ENCODE measurements at regions of chr13 and their contacts with region 1.

Region 1: DNA sequence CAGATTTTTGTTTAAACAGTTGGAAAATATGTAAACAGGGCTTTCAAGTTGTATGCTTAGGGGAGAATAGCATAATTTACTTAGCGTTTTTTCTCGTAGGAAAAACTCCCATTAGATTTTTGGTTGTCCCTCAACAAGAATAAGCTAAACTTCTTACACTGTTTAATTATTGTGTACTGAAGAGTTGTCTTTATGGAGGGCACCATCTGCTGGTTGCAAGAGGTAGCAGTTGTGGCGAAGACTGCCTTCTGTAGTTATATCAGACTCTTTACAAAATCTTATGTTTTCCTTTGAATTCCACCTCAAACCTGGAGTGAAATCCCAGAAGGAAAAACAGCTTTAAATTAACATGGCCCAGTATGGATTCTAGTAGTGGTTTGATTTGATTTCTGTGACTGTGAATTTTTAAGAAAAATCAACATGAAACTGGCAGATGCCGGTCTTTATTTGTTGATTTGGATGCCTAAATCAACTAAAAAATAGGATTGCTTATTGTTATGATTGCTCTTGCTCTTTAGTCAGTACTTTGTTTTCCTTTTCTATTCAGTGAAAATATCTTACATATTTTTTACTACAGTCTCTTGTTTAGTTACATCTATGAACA is 53.4 kb downstream of the PDS5B start:
- DNase-seq: peak; percentile 57
- H3K4me3 ChIP-seq: no peak overlapping the region
- H3K27ac ChIP-seq: no peak overlapping the region
- H3K4me1 ChIP-seq: peaks cover 0 to 34% (median 13%) of the 10 kb centered on the region in 4 donors
- H3K27me3 ChIP-seq: no peaks in the 10 kb centered on the region
- CTCF ChIP-seq: peak; percentile 68 to 79 (median 77)
- EP300 ChIP-seq: no peak
- POLR2A ChIP-seq: no peak

Region 2: DNA sequence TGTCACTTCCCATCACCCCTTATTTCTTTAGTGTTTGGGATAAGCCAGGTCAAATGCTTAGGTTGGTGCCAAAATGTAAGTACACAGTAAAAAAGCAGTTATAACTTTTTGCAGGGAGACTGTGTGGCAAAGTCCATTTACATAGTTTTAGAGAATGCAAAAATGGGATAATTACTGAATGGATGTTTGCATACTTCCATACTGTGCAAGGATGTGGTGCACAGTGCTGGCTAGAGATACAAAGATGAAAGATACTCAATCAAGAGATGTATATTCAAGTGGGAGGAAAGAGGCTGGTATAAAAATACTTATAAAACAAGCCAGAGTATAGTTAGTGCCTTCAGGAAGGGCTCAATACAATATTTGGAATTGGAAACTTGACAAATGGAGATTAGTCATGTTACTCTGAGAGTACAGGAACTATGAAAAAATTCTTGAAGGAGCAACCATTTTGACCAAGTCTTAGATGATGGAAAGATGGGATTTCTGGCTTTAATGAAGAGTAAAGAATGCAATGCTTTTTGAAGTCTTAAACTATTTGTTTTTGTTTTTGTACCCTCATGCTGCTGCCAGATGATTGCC is 45.4 kb before region 1 on chr13:
- in situ Hi-C with region 1: loop called in 2 of 4 experiments (anchors 5 to 10 kb)
- intact Hi-C with region 1: no loop called
- DNase-seq: no peak
- H3K4me3 ChIP-seq: no peak overlapping the region
- H3K27ac ChIP-seq: no peak overlapping the region
- H3K4me1 ChIP-seq: peaks cover 7 to 37% (median 13%) of the 10 kb centered on the region in 4 donors
- H3K27me3 ChIP-seq: no peaks in the 10 kb centered on the region
- CTCF ChIP-seq: no peak
- EP300 ChIP-seq: no peak
- POLR2A ChIP-seq: no peak

Measured in transverse colon (tissue), 4 donors.